ENCODE measurements at regions of chr18 and their contacts with region 1.

Region 1: DNA sequence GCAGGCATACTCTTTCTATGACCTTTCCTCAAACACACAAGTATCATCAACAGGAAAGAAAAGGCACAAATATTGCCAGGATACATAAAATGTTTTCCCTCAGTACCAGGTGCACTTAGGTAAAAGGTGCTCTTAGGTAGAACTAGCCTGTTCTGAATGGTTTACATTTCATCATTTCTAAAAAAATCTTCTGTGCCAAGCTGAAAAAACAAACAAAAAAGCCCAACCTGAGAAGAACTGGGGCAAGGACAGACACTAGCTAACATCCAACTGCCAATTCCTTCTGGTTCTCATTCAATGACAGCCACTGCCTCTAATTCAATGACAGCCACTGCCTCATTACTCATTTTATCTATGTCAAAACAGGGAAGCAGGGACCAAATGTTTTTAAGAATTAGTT is 68.5 kb downstream of the SPIRE1 start:
- DNase-seq: no peak
- H3K4me3 ChIP-seq: no peak overlapping the region
- H3K27ac ChIP-seq: no peak overlapping the region
- H3K4me1 ChIP-seq: no peaks in the 10 kb centered on the region
- H3K27me3 ChIP-seq: no peaks in the 10 kb centered on the region
- CTCF ChIP-seq: no peak

Region 2: GRCh38 chr18:12098374-12098773 is 491.1 kb before region 1 on chr18:
- CTCF ChIA-PET with region 1: no interaction called
- POLR2A ChIA-PET with region 1: no interaction called
- intact Hi-C with region 1: no loop called
- DNase-seq: no peak
- H3K4me3 ChIP-seq: no peak overlapping the region
- H3K27ac ChIP-seq: no peak overlapping the region
- H3K4me1 ChIP-seq: no peaks in the 10 kb centered on the region
- H3K27me3 ChIP-seq: peaks cover 34% of the 10 kb centered on the region
- CTCF ChIP-seq: no peak

Region 3: DNA sequence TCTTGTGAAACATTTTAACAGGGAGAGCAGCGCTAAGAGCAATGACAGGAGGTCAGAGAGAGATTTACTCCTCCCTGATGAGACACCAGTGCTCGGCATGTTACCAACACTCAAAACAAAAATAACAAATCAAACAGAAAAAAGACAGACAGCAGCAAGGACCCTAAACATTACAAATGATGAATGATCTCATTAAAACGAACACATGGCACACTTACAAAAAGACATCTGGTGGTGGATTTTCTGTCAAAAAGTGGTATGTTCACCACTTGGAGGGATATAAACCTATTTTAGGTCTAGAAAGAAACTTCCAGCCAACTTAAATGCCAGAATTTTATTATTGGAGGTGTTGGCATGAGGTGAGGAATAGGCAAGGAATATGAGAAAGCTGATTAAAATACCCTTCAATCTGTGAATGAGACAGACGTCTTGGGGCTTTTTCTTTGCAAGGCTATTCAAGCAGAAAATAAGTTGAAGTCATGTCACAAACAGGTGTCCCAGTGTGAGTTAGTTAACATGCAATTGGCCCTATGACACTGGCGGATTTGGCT is 68.9 kb before region 1 on chr18:
- CTCF ChIA-PET with region 1: no interaction called
- POLR2A ChIA-PET with region 1: no interaction called
- intact Hi-C with region 1: no loop called
- DNase-seq: peak; percentile 20
- H3K4me3 ChIP-seq: no peak overlapping the region
- H3K27ac ChIP-seq: no peak overlapping the region
- H3K4me1 ChIP-seq: peaks cover 17% of the 10 kb centered on the region
- H3K27me3 ChIP-seq: no peaks in the 10 kb centered on the region
- CTCF ChIP-seq: no peak

Region 4: DNA sequence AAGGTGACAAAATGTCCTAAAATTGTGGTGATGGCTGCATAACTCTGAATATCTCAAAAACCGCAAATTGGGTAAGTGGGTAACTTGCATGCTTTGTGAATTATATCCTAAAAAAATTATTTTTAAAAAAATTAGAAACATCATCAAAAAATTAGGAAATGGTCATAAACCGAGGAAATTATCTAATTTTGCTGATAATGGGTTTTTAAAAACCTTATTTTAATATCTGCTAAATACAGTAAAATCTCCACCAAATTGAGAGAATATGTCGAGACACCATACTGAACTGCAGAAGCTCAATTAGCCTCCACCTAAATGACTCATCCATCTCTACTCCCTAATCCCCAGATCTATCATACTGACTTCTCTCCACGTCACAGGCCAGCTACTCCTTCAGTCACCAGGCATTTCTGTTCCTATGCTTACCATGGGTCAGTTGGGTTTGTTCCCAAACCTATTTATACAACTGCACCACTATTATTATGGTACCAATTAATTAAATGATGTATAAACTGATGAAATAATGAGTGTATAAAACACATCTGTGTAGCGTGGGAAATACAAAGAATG is 32.4 kb after region 1 on chr18:
- CTCF ChIA-PET with region 1: no interaction called
- POLR2A ChIA-PET with region 1: no interaction called
- intact Hi-C with region 1: loop called (anchors 5 kb)
- DNase-seq: peak; percentile 52
- H3K4me3 ChIP-seq: no peak overlapping the region
- H3K27ac ChIP-seq: no peak overlapping the region
- H3K4me1 ChIP-seq: peaks cover 7% of the 10 kb centered on the region
- H3K27me3 ChIP-seq: no peaks in the 10 kb centered on the region
- CTCF ChIP-seq: no peak